CD14-positive monocyte (primary cell): ENCODE measurements at regions of chr4 and their contacts with region 1.

Region 1: GRCh38 chr4:85734424-85734831 is 259.5 kb downstream of the ARHGAP24 start:
- DNase-seq: peak; percentile 32 to 72 (median 44)
- H3K4me3 ChIP-seq: no peak overlapping the region
- H3K4me3 Mint-ChIP-seq: no peak overlapping the region
- H3K27ac ChIP-seq: peak overlapping the region in 1 of 2 donors; percentile 68
- H3K27ac Mint-ChIP-seq: peak overlapping the region; percentile 84 to 95 (median 90)
- H3K4me1 ChIP-seq: peaks cover 41 to 50% of the 10 kb centered on the region in 2 donors
- H3K4me1 Mint-ChIP-seq: peaks cover 48% of the 10 kb centered on the region
- H3K27me3 ChIP-seq: no peaks in the 10 kb centered on the region
- H3K27me3 Mint-ChIP-seq: peaks cover 0 to 3% (median 0%) of the 10 kb centered on the region in 3 donors
- CTCF ChIP-seq: no peak

Region 2: GRCh38 chr4:85474818-85475630 is 259.4 kb before region 1 on chr4 and contains the start of gene ARHGAP24:
- intact Hi-C with region 1: loop called in 1 of 2 experiments (anchors 10 kb)
- DNase-seq: peak; percentile 65 to 82 (median 71)
- H3K4me3 ChIP-seq: peak within 1 kb of the TSS; percentile 65 to 91 (median 72)
- H3K4me3 Mint-ChIP-seq: peak within 1 kb of the TSS; percentile 95 to 96
- H3K27ac ChIP-seq: peak within 1 kb of the TSS; percentile 86 to 93
- H3K27ac Mint-ChIP-seq: peak within 1 kb of the TSS; percentile 86 to 97 (median 95)
- H3K4me1 ChIP-seq: peaks cover 23 to 40% of the 10 kb centered on the region in 2 donors
- H3K4me1 Mint-ChIP-seq: peaks cover 43% of the 10 kb centered on the region
- H3K27me3 ChIP-seq: peaks cover 0 to 2% of the 10 kb centered on the region in 2 donors
- H3K27me3 Mint-ChIP-seq: peaks cover 8 to 11% (median 9%) of the 10 kb centered on the region in 3 donors
- CTCF ChIP-seq: no peak
- polyA plus RNA-seq, gene ARHGAP24: 12.5 to 32.0 (median 18.8) TPM

Region 3: GRCh38 chr4:86092684-86093083 is 358.3 kb after region 1 on chr4:
- intact Hi-C with region 1: no loop called
- DNase-seq: no peak
- H3K4me3 ChIP-seq: no peak overlapping the region
- H3K4me3 Mint-ChIP-seq: no peak overlapping the region
- H3K27ac ChIP-seq: no peak overlapping the region
- H3K27ac Mint-ChIP-seq: no peak overlapping the region
- H3K4me1 ChIP-seq: no peaks in the 10 kb centered on the region
- H3K4me1 Mint-ChIP-seq: no peaks in the 10 kb centered on the region
- H3K27me3 ChIP-seq: no peaks in the 10 kb centered on the region
- H3K27me3 Mint-ChIP-seq: peaks cover 0 to 1% (median 0%) of the 10 kb centered on the region in 3 donors
- CTCF ChIP-seq: no peak

Region 4: DNA sequence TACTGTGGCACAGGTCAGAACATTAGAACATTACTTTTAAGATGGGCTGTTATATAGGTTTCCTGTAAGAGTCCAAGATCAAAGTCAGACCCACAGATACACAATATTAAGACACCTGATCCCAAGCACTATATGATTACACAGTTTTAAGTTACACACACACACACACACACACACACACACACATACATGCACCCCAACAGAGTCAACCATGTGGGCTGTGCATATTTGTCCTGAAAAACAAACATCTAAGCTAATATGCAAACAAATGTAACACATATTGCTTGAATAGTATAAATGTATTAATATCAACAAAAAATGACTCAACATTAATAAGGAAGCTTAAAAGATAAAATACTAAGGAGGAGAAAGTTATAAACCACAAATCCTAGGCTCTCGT is 576.5 kb after region 1 on chr4:
- intact Hi-C with region 1: no loop called
- DNase-seq: no peak
- H3K4me3 ChIP-seq: no peak overlapping the region
- H3K4me3 Mint-ChIP-seq: no peak overlapping the region
- H3K27ac ChIP-seq: no peak overlapping the region
- H3K27ac Mint-ChIP-seq: no peak overlapping the region
- H3K4me1 ChIP-seq: no peaks in the 10 kb centered on the region
- H3K4me1 Mint-ChIP-seq: no peaks in the 10 kb centered on the region
- H3K27me3 ChIP-seq: no peaks in the 10 kb centered on the region
- H3K27me3 Mint-ChIP-seq: no peaks in the 10 kb centered on the region
- CTCF ChIP-seq: no peak